HepG2 (cell line): ENCODE measurements at regions of chr5 and their contacts with region 1.

Region 1: DNA sequence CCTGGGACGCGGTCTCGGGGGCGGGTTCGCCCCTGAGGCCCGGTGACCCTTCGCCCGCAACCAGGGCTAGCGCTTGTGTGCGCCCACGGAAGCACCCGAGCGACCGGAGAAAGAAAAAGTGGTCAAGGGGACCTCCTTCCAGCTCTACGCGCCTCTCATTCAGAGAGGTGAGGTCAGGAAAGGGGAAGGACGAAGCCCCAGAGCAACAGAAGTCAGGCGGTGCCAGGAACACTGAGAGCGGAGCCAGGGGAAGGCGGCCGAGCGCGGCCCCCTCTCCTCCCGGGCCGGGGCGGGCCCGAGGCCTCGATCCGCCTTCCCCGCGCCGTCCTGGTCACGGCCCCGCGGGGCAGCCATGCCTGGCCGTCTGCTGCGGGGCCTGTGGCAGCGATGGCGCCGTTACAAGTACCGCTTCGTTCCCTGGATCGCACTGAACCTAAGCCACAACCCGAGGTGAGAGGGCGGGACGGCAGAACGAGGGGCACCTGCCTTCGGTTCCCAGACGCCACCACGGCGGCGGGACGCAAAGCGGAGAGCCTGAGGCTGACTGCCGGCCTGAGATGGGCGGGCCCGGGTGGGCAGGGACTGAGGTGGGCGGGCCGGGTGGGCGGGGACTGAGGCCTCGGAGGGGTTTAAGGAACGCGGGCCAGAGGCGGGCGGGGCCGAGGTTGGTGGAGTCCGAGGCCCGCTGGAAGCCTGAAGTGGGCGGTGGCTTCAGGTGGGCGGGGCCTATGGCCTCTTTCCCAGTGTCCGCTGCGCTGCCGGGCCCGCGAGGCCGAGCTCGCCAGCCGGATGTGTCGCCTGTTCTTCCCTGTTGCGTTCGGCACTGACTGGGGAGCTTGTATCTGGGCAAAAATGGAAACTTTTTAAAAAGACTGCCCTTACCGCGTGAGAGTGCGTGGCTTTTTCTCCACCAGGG is at the start of gene SETD9:
- DNase-seq: peak; percentile 93
- ATAC-seq: peak; percentile 89
- H3K4me3 ChIP-seq: peak within 1 kb of the TSS; percentile 74 to 86 (median 82)
- H3K27ac ChIP-seq: peak within 1 kb of the TSS; percentile 97
- H3K4me1 ChIP-seq: peaks cover 26% of the 10 kb centered on the region
- H3K27me3 ChIP-seq: no peaks in the 10 kb centered on the region; a peak in 1 of 5 replicates
- CTCF ChIP-seq: peak; percentile 14; the same call in 1 of the 2 replicates
- EP300 ChIP-seq: peak in 1 of 2 experiments; percentile 15; a peak in 1 of 4 replicates
- POLR2A ChIP-seq: peak; percentile 91 to 98
- RAD21 ChIP-seq: no peak
- total RNA-seq, gene SETD9: 14.6 and 17.8 TPM in 2 replicates

Region 2: DNA sequence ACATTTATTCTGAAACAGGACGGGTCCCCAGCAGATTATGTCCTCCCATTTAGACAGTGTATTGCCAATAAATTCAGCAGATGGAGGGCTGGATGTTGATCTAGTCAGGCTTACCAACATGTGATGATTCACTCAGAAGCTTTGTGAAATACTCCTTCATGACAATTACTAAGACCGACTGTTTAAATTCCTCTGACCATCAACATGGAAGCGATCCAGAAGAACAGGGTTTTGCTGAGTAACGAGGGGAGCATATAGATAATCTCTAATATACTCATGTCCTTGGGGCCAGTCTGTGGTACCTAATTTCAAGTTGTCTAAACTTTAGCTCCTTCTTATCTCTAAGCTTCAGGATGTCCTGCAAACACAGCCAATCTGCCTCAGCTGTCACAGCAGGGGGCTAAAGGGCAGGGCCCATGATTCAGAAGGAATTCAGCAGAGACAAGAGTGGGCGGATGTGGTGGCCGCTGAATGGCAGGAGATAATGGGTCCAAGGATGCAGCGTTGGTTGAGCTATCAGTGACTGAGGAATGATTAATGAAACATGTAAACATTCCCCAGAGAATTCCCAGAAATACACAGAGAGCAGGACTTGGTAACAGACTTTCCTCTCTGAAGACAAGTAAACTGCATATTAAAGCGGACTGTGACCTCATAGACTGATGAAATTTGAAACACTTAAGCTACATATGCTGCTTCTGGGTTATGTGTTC is 785.9 kb before region 1 on chr5:
- CTCF ChIA-PET with region 1: no interaction called
- POLR2A ChIA-PET with region 1: no interaction called
- in situ Hi-C with region 1: no loop called
- intact Hi-C with region 1: loop called (anchors 5 kb)
- DNase-seq: peak; percentile 99
- ATAC-seq: peak; percentile 98
- H3K4me3 ChIP-seq: peak overlapping the region; percentile 6 to 45 (median 29); a peak in 2 of 6 replicates
- H3K27ac ChIP-seq: peak overlapping the region; percentile 86
- H3K4me1 ChIP-seq: peaks cover 73% of the 10 kb centered on the region
- H3K27me3 ChIP-seq: no peaks in the 10 kb centered on the region
- CTCF ChIP-seq: 0 out of 2 replicates have a peak, but pooled peaks have one; percentile 6
- EP300 ChIP-seq: peak in 1 of 2 experiments; percentile 91; a peak in 2 of 4 replicates
- POLR2A ChIP-seq: peak in 1 of 2 experiments; percentile 43; a peak in 1 of 4 replicates
- RAD21 ChIP-seq: no peak

Region 3: GRCh38 chr5:56814963-56815658 is 94.4 kb before region 1 on chr5 and contains the start of gene MAP3K1:
- CTCF ChIA-PET with region 1: no interaction called
- POLR2A ChIA-PET with region 1: no interaction called
- in situ Hi-C with region 1: no loop called
- intact Hi-C with region 1: no loop called
- DNase-seq: peak; percentile 82
- ATAC-seq: peak; percentile 84
- H3K4me3 ChIP-seq: peak within 1 kb of the TSS; percentile 88 to 95 (median 89)
- H3K27ac ChIP-seq: peak within 1 kb of the TSS; percentile 93
- H3K4me1 ChIP-seq: peaks cover 43% of the 10 kb centered on the region
- H3K27me3 ChIP-seq: no peaks in the 10 kb centered on the region; a peak in 1 of 5 replicates
- CTCF ChIP-seq: peak; percentile 9; the same call in 1 of the 2 replicates
- EP300 ChIP-seq: no peak
- POLR2A ChIP-seq: peak; percentile 62 to 73; a peak in 3 of 4 replicates
- RAD21 ChIP-seq: peak; percentile 27
- total RNA-seq, gene MAP3K1: 30.3 and 44.1 TPM in 2 replicates

Region 4: GRCh38 chr5:56852228-56853000 is 57.1 kb before region 1 on chr5:
- CTCF ChIA-PET with region 1: no interaction called
- POLR2A ChIA-PET with region 1: no interaction called
- in situ Hi-C with region 1: no loop called
- intact Hi-C with region 1: no loop called
- DNase-seq: no peak
- ATAC-seq: no peak
- H3K4me3 ChIP-seq: no peak overlapping the region
- H3K27ac ChIP-seq: no peak overlapping the region
- H3K4me1 ChIP-seq: peaks cover 42% of the 10 kb centered on the region
- H3K27me3 ChIP-seq: no peaks in the 10 kb centered on the region
- CTCF ChIP-seq: no peak
- EP300 ChIP-seq: no peak
- POLR2A ChIP-seq: no peak
- RAD21 ChIP-seq: no peak

Region 5: GRCh38 chr5:56951946-56952691 is 42.6 kb after region 1 on chr5 and contains the start of gene MIER3:
- CTCF ChIA-PET with region 1: no interaction called
- POLR2A ChIA-PET with region 1: interaction called, 25 read pairs
- in situ Hi-C with region 1: no loop called
- intact Hi-C with region 1: loop called (anchors 5 kb)
- DNase-seq: peak; percentile 43
- ATAC-seq: peak; percentile 95
- H3K4me3 ChIP-seq: peak within 1 kb of the TSS; percentile 90 to 95 (median 91)
- H3K27ac ChIP-seq: peak within 1 kb of the TSS; percentile 72
- H3K4me1 ChIP-seq: peaks cover 31% of the 10 kb centered on the region
- H3K27me3 ChIP-seq: no peaks in the 10 kb centered on the region; a peak in 1 of 5 replicates
- CTCF ChIP-seq: no peak
- EP300 ChIP-seq: no peak
- POLR2A ChIP-seq: peak; percentile 55 to 56
- RAD21 ChIP-seq: no peak
- total RNA-seq, gene MIER3: 38.8 and 63.5 TPM in 2 replicates

Region 6: DNA sequence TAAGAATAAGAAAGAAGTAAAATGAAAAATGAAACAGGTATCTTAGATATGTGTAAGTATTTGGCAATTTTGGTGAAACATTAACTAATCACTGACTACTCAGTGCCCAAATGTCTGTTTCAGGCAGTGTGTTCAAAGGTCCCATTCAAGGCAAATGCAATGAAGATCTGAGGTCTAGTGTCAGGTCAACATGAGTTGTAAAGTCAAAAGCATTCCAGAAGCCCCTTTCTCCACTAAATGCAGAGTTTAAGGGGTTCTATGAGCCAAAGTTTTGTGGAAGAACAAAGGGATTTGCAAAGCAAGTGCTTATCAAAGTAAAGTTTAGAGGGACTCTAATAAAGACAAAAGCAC is 193.3 kb after region 1 on chr5:
- CTCF ChIA-PET with region 1: no interaction called
- POLR2A ChIA-PET with region 1: interaction called, 18 read pairs
- in situ Hi-C with region 1: no loop called
- intact Hi-C with region 1: loop called (anchors 1 kb)
- DNase-seq: peak; percentile 95
- ATAC-seq: peak; percentile 94
- H3K4me3 ChIP-seq: peak overlapping the region; percentile 38 to 65 (median 55); a peak in 4 of 6 replicates
- H3K27ac ChIP-seq: peak overlapping the region; percentile 100
- H3K4me1 ChIP-seq: peaks cover 58% of the 10 kb centered on the region
- H3K27me3 ChIP-seq: no peaks in the 10 kb centered on the region
- CTCF ChIP-seq: no peak
- EP300 ChIP-seq: peak; percentile 56 to 90; a peak in 2 of 4 replicates
- POLR2A ChIP-seq: 0 out of 4 replicates have a peak, but pooled peaks of 1 of the 2 experiments have one; percentile 46
- RAD21 ChIP-seq: no peak

Region 7: DNA sequence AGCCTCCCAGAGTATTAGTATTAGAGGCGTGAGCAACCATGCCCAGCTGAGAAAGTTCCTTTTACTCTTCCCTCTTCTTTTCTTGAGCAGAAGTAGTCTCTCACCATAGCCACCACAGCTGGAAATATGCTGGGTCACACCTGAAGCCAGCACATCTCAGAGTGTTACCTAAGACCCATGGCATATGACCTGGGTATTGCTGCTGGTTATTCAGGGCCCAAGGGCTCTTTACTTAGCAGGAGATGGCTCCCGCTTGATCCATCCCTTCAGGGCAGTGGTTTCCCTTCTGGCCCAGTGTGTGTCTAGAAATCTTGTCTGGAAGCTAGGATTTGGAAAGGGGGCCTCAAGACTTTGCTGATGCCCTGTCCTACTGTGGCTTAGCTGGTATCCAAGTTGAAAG is 241.1 kb after region 1 on chr5:
- CTCF ChIA-PET with region 1: no interaction called
- POLR2A ChIA-PET with region 1: no interaction called
- in situ Hi-C with region 1: no loop called
- intact Hi-C with region 1: no loop called
- DNase-seq: no peak
- ATAC-seq: no peak
- H3K4me3 ChIP-seq: no peak overlapping the region
- H3K27ac ChIP-seq: no peak overlapping the region
- H3K4me1 ChIP-seq: 0 out of 2 replicates have a peak, but pooled peaks cover 6% of the 10 kb centered on the region
- H3K27me3 ChIP-seq: no peaks in the 10 kb centered on the region
- CTCF ChIP-seq: no peak
- EP300 ChIP-seq: no peak
- POLR2A ChIP-seq: no peak
- RAD21 ChIP-seq: no peak

Region 8: DNA sequence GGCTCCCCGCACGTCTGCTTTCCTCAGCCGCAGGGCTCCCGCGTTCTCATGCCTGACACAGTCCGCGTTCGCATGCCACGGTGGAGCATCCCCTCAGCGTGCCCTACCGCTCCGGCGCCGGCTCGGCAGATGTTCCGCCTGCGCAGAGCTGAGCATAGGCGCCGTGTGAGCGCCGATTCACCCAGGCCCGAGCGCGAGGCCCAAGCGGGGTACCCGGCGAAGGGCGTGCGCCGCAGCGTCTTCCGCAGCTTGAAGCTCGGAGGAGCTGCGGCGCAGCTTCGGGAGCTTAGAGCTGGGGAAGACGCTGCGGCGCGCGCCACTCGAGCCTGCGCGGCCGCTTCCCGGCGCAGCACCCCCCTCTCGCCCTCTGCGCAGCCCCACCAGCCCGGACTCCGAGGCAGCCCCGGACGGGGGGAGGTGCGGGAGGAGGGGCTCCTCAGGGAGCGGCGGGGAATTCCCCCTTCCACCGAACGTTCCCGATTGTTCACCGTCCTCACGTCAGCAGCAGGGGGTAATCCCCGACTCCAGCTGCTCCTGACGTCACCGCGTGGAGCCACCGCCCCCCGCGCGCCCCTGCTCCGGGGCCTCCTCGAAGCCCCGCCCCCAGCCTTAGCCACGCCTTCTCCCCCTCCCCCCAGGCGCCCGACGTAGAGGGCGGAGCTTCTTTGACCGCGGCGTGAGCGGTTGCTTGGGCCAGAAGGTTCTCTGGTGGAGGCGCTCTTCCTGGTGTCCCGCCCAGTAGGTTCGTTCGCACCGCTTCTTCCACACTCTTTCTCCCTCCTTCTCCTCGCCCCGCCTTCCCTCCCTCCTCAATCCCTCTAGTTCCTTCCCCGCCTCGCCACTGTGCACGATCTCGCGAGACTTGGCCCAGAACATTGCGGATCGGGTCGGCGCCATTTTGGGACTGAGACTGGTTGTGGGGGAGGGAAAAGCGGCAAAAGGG is 263.9 kb after region 1 on chr5 and contains the start of gene GPBP1:
- CTCF ChIA-PET with region 1: no interaction called
- POLR2A ChIA-PET with region 1: interaction called, 24 read pairs
- in situ Hi-C with region 1: no loop called
- intact Hi-C with region 1: loop called (anchors 1 kb)
- DNase-seq: peak; percentile 96
- ATAC-seq: peak; percentile 85
- H3K4me3 ChIP-seq: peak within 1 kb of the TSS; percentile 90 to 94 (median 94)
- H3K27ac ChIP-seq: peak within 1 kb of the TSS; percentile 97
- H3K4me1 ChIP-seq: peaks cover 9% of the 10 kb centered on the region
- H3K27me3 ChIP-seq: no peaks in the 10 kb centered on the region; a peak in 1 of 5 replicates
- CTCF ChIP-seq: peak; percentile 47
- EP300 ChIP-seq: 0 out of 4 replicates have a peak, but pooled peaks of 1 of the 2 experiments have one; percentile 37
- POLR2A ChIP-seq: peak; percentile 50 to 79
- RAD21 ChIP-seq: peak; percentile 45; the same call in 1 of the 2 replicates
- total RNA-seq, gene GPBP1: 72.2 and 101 TPM in 2 replicates

Region 9: GRCh38 chr5:57209351-57210040 is 299.9 kb after region 1 on chr5:
- CTCF ChIA-PET with region 1: no interaction called
- POLR2A ChIA-PET with region 1: no interaction called
- in situ Hi-C with region 1: loop called (anchors 10 kb)
- intact Hi-C with region 1: no loop called
- DNase-seq: no peak
- ATAC-seq: no peak
- H3K4me3 ChIP-seq: no peak overlapping the region
- H3K27ac ChIP-seq: no peak overlapping the region
- H3K4me1 ChIP-seq: peaks cover 41% of the 10 kb centered on the region
- H3K27me3 ChIP-seq: no peaks in the 10 kb centered on the region
- CTCF ChIP-seq: no peak
- EP300 ChIP-seq: no peak
- POLR2A ChIP-seq: no peak
- RAD21 ChIP-seq: no peak

Region 10: GRCh38 chr5:57221049-57221568 is 311.6 kb after region 1 on chr5:
- CTCF ChIA-PET with region 1: no interaction called
- POLR2A ChIA-PET with region 1: interaction called, 3 read pairs
- in situ Hi-C with region 1: loop called (anchors 10 kb)
- intact Hi-C with region 1: loop called (anchors 2 kb)
- DNase-seq: peak; percentile 59
- ATAC-seq: peak; percentile 66; the same call in 2 of the 3 replicates
- H3K4me3 ChIP-seq: no peak overlapping the region
- H3K27ac ChIP-seq: no peak overlapping the region
- H3K4me1 ChIP-seq: 0 out of 2 replicates have a peak, but pooled peaks cover 12% of the 10 kb centered on the region
- H3K27me3 ChIP-seq: no peaks in the 10 kb centered on the region
- CTCF ChIP-seq: peak; percentile 68
- EP300 ChIP-seq: no peak
- POLR2A ChIP-seq: no peak
- RAD21 ChIP-seq: peak; percentile 60; the same call in 1 of the 2 replicates

Region 11: GRCh38 chr5:57231607-57232006 is 322.1 kb after region 1 on chr5:
- CTCF ChIA-PET with region 1: no interaction called
- POLR2A ChIA-PET with region 1: no interaction called
- in situ Hi-C with region 1: no loop called
- intact Hi-C with region 1: no loop called
- DNase-seq: no peak
- ATAC-seq: no peak
- H3K4me3 ChIP-seq: no peak overlapping the region
- H3K27ac ChIP-seq: no peak overlapping the region
- H3K4me1 ChIP-seq: no peaks in the 10 kb centered on the region
- H3K27me3 ChIP-seq: no peaks in the 10 kb centered on the region
- CTCF ChIP-seq: no peak
- EP300 ChIP-seq: no peak
- POLR2A ChIP-seq: no peak
- RAD21 ChIP-seq: no peak